Panc1 (cell line): ENCODE measurements at regions of chr6 and their contacts with region 1.

Region 1: DNA sequence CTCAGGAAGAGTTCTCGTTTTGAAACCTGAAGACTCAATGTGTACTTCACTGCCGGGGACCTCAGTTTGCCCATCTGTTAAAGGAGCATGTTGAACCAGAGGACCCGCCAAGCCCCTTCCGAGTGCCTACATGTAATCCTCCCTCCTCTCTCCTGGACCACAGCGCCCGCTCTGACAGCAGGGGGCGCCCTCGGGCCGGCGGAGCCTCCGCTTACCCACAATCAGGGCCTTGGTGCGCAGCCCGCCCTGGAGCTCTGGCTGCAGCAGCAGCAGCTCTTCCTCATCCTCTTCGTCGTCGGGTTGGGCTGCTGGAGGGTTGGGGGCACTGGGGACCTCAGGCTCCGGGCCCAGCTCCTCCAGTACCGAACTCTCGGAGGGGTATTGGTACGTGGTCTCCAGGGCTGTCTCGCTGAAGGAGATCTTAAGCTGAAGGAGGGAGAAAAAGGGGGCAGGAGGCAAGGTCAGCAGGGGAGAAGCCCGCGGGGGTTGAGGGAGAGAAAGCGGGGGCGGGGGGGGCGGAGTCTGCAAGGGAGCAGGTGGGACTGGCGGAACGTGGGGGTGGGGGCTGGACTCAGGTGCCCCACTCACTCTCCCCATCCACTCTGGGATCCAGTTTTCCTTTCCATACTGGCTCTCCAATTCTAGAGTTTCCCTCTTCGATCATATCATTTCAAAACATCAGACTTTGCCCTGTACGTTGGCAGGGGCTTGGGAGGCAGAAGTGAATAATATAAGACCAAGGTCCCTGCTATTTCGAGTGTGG is 6.3 kb upstream of the DHX16 start:
- DNase-seq: no peak
- ATAC-seq: peak; percentile 78
- H3K4me3 ChIP-seq: peak overlapping the region; percentile 1 to 45; a peak in 3 of 4 replicates
- H3K27ac ChIP-seq: peak overlapping the region; percentile 64
- H3K4me1 ChIP-seq: peaks cover 19% of the 10 kb centered on the region
- H3K27me3 ChIP-seq: no peaks in the 10 kb centered on the region
- CTCF ChIP-seq: peak; percentile 98

Region 2: DNA sequence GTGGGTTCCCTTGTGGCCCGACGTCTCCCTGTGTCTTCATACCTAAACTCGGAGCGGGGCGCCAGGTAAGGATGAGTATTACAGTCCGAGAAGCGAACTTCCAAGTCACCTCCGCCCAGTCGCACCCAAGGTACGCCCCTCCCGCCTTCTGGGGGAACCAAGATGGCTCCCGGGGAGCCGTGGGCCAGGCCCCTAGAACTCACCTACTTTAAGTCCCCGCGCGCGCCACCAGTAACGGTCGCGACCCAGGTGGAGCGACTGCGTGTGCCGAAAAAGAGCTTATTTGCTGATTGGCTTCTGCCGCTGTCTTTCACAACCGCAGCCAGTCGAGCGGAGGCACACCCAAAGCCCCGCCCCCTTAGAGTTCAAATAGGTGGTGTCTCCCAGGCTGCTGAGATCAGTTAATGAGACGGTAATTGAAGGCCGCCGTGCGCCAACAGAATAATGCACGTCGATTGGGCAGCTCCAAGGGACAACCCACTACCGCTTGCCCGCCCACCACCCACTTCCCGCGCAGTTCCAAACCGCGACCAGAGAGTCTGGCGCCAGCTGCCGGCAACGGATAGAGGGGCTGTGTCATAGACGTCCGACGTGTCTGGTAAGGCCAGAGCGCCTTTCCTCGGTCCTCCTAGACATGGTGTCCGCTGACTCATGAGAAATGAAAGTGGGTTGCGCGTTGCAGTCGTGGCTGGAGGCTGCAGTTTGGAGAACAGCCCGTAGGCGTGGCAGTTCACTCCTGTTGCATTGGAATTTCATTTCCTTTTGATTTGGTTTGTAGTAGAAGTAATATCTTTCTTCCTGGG is 38.1 kb after region 1 on chr6 and contains the start of gene MDC1:
- CTCF ChIA-PET with region 1: interaction called, 10 read pairs
- POLR2A ChIA-PET with region 1: no interaction called
- in situ Hi-C with region 1: no loop called
- intact Hi-C with region 1: loop called (anchors 1 kb)
- DNase-seq: peak; percentile 98
- ATAC-seq: peak; percentile 88
- H3K4me3 ChIP-seq: peak within 1 kb of the TSS; percentile 69 to 85
- H3K27ac ChIP-seq: peak within 1 kb of the TSS; percentile 100
- H3K4me1 ChIP-seq: peaks cover 15% of the 10 kb centered on the region
- H3K27me3 ChIP-seq: no peaks in the 10 kb centered on the region
- CTCF ChIP-seq: no peak
- total RNA-seq, gene MDC1: 68.6 TPM

Region 3: GRCh38 chr6:30742316-30743098 is 63.4 kb after region 1 on chr6 and contains the start of gene FLOT1:
- CTCF ChIA-PET with region 1: interaction called, 5 read pairs
- POLR2A ChIA-PET with region 1: interaction called, 12 read pairs
- in situ Hi-C with region 1: no loop called
- intact Hi-C with region 1: no loop called
- DNase-seq: peak; percentile 85
- ATAC-seq: peak; percentile 80
- H3K4me3 ChIP-seq: peak within 1 kb of the TSS; percentile 81 to 85
- H3K27ac ChIP-seq: peak within 1 kb of the TSS; percentile 97
- H3K4me1 ChIP-seq: peaks cover 39% of the 10 kb centered on the region
- H3K27me3 ChIP-seq: no peaks in the 10 kb centered on the region
- CTCF ChIP-seq: no peak
- total RNA-seq, gene FLOT1: 176 TPM

Region 4: DNA sequence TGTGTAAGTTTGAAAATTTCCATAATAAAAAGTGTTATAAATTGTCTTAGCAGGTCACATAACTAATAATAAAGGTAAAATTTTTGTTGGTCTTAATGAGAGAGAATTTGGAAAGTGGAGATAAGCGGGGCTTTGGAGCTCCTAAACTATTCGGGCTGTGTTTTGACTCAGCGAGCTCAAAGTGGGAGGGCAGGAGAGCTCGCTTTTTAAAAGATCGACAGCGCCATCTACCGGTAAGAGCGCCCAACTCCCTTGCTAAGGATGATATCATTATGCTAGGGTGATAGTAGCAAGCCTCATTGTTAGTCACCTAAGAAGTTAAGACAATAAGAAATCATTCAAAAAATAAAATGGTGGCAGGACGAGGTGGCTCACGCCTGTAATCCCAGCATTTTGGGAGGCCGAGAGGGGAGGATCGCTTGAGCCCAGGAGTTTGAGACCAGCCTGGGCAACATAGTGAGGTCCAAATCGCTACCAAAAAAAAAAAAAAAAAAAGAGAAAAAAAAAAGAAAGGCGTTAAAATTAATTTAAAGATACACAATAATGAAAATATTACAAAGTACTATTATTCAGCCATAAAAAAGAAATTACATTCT is 408.4 kb after region 1 on chr6:
- CTCF ChIA-PET with region 1: no interaction called
- POLR2A ChIA-PET with region 1: no interaction called
- in situ Hi-C with region 1: no loop called
- intact Hi-C with region 1: loop called (anchors 5 kb)
- DNase-seq: no peak
- ATAC-seq: peak; percentile 97
- H3K4me3 ChIP-seq: no peak overlapping the region
- H3K27ac ChIP-seq: no peak overlapping the region
- H3K4me1 ChIP-seq: peaks cover 3% of the 10 kb centered on the region; the same call in 1 of the 2 replicates
- H3K27me3 ChIP-seq: no peaks in the 10 kb centered on the region
- CTCF ChIP-seq: peak; percentile 84